Ovary (tissue), 10 donors: ENCODE measurements at regions of chr17 and their contacts with region 1.

Region 1: GRCh38 chr17:47840740-47841603 is at the start of gene SCRN2:
- DNase-seq: peak; percentile 85 to 95 (median 89)
- H3K4me3 ChIP-seq: peak within 1 kb of the TSS; percentile 75
- H3K27ac ChIP-seq: peak within 1 kb of the TSS; percentile 46 to 70
- H3K4me1 ChIP-seq: peaks cover 4% of the 10 kb centered on the region
- H3K27me3 ChIP-seq: no peaks in the 10 kb centered on the region
- CTCF ChIP-seq: peak; percentile 91 to 98 (median 98)
- EP300 ChIP-seq: no peak
- POLR2A ChIP-seq: no peak
- total RNA-seq, gene SCRN2: 25.4 to 43.9 (median 36.8) TPM

Region 2: DNA sequence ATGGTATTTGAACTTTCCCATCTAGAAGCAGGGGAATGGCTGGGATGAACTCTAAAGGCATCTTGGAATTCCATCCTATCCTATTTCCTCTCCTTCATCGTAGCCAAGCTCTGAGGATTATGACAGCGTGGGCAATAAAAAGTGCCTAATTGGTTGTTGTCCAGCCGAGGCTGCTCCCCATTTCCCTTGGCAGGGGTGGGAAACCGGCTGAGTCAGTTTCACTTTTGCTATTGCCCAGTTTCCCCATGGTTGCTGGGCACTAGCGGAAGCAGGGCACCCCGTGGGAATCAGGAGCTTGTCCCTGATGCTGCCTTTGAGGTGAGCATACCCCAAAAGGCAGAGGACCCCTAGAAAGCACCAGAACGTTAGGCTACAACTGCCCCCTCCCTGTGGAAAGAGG is 41.3 kb after region 1 on chr17:
- intact Hi-C with region 1: loop called in 2 of 4 experiments (anchors 2 to 5 kb)
- DNase-seq: no peak
- H3K4me3 ChIP-seq: no peak overlapping the region
- H3K27ac ChIP-seq: no peak overlapping the region
- H3K4me1 ChIP-seq: no peaks in the 10 kb centered on the region
- H3K27me3 ChIP-seq: no peaks in the 10 kb centered on the region
- CTCF ChIP-seq: no peak
- EP300 ChIP-seq: no peak
- POLR2A ChIP-seq: no peak

Region 3: GRCh38 chr17:47889734-47890529 is 49.0 kb after region 1 on chr17:
- intact Hi-C with region 1: loop called in 3 of 4 experiments (anchors 1 to 2 kb)
- DNase-seq: peak; percentile 84 to 92 (median 90)
- H3K4me3 ChIP-seq: no peak overlapping the region
- H3K27ac ChIP-seq: no peak overlapping the region
- H3K4me1 ChIP-seq: no peaks in the 10 kb centered on the region
- H3K27me3 ChIP-seq: no peaks in the 10 kb centered on the region
- CTCF ChIP-seq: peak; percentile 86 to 94 (median 89)
- EP300 ChIP-seq: no peak
- POLR2A ChIP-seq: no peak

Region 4: GRCh38 chr17:47957591-47958428 is 116.8 kb after region 1 on chr17 and contains the start of gene PRR15L:
- intact Hi-C with region 1: loop called in 1 of 4 experiments (anchors 10 kb)
- DNase-seq: no peak
- H3K4me3 ChIP-seq: peak within 1 kb of the TSS; percentile 16
- H3K27ac ChIP-seq: no peak within 1 kb of the TSS
- H3K4me1 ChIP-seq: no peaks in the 10 kb centered on the region
- H3K27me3 ChIP-seq: no peaks in the 10 kb centered on the region
- CTCF ChIP-seq: no peak
- EP300 ChIP-seq: no peak
- POLR2A ChIP-seq: no peak
- total RNA-seq, gene PRR15L: 0.18 to 22.3 (median 0.82) TPM